ENCODE measurements at regions of chr2 and their contacts with region 1.

Region 1: GRCh38 chr2:148020111-148021058 is at the start of gene ORC4:
- DNase-seq: peak; percentile 100
- H3K4me3 ChIP-seq: peak within 1 kb of the TSS; percentile 70
- H3K27ac ChIP-seq: peak within 1 kb of the TSS; percentile 87
- H3K4me1 ChIP-seq: peaks cover 13% of the 10 kb centered on the region
- H3K27me3 ChIP-seq: no peaks in the 10 kb centered on the region
- CTCF ChIP-seq: peak; percentile 36
- total RNA-seq, gene ORC4: 63.5 and 63.9 TPM in 2 replicates

Region 2: DNA sequence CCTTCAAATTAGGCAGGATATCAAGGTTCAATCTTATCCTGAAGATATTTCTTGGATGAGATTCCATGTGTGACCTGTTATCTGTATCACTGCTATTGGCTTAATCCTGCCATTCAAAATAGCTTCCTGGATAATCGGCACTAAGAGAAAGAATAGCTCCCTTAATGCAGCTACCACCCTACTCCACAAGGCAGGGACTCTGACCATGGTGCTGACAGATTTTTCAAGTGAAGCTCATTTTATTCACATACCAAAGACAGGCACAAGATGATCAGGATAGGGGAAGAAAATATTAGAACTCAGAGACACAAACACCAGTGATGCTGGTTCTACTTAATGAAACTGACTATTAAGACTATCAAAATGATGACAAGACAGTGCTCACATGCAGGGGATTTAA is 74.7 kb before region 1 on chr2:
- CTCF ChIA-PET with region 1: no interaction called
- POLR2A ChIA-PET with region 1: no interaction called
- intact Hi-C with region 1: loop called (anchors 2 kb)
- DNase-seq: peak; percentile 9
- H3K4me3 ChIP-seq: no peak overlapping the region
- H3K27ac ChIP-seq: no peak overlapping the region
- H3K4me1 ChIP-seq: no peaks in the 10 kb centered on the region
- H3K27me3 ChIP-seq: no peaks in the 10 kb centered on the region
- CTCF ChIP-seq: no peak